Mammary epithelial cell (primary cell): ENCODE measurements at regions of chr16 and their contacts with region 1.

Region 1: GRCh38 chr16:89641458-89642119 is 15.9 kb downstream of the CHMP1A start:
- DNase-seq: no peak
- H3K4me3 ChIP-seq: no peak overlapping the region
- H3K27ac ChIP-seq: no peak overlapping the region
- H3K4me1 ChIP-seq: peaks cover 4% of the 10 kb centered on the region
- H3K27me3 ChIP-seq: no peaks in the 10 kb centered on the region
- CTCF ChIP-seq: no peak

Region 2: DNA sequence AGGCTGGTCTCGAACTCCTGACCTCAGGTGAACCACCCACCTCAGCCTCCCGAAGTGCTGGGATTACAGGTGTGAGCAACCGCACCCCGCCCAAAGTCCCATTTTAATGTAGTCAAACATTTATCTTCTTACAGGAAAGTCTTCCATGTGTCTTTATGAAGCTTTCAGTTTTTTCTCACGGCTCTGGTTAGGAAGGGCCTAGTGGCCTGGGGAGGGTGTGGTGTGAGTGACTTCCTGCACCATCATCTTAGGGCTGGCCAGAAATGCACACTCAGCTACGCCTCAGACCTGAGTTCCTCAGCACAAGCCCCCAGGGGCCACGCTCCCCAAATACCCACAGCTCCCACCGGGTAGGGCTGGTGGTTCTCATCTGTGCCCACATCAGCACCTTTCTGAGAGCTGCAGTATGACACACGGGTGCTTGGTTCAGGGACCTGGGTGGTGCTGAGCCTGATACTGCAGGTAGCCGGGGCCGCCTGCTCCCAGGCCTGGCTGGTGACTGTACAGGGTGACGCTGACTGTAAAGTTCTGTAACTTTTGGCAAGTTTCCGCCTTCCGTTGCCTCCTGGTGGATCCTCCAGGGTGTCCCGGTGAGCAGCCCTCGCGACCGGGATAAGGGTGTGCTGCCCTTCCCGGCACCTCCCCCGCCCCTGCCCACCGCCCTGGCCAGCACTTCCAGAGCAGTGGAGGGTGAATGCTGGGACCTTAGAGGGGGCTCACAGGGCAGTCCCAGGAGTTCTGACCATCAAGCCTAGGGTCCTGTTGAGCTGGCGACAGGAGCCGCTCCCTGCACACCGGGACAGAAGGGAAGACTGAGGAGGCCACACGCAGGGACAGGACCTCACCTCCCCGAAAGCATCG is 371.6 kb before region 1 on chr16:
- CTCF ChIA-PET with region 1: no interaction called
- dilution Hi-C with region 1: loop called (anchors 10 kb)
- in situ Hi-C with region 1: no loop called
- intact Hi-C with region 1: no loop called
- DNase-seq: no peak
- H3K4me3 ChIP-seq: no peak overlapping the region
- H3K27ac ChIP-seq: no peak overlapping the region
- H3K4me1 ChIP-seq: no peaks in the 10 kb centered on the region
- H3K27me3 ChIP-seq: no peaks in the 10 kb centered on the region
- CTCF ChIP-seq: no peak

Region 3: GRCh38 chr16:89505204-89506112 is 136.1 kb before region 1 on chr16:
- CTCF ChIA-PET with region 1: no interaction called
- dilution Hi-C with region 1: no loop called
- in situ Hi-C with region 1: no loop called
- intact Hi-C with region 1: no loop called
- DNase-seq: peak; percentile 79
- H3K4me3 ChIP-seq: no peak overlapping the region
- H3K27ac ChIP-seq: peak overlapping the region; percentile 47
- H3K4me1 ChIP-seq: peaks cover 37% of the 10 kb centered on the region
- H3K27me3 ChIP-seq: no peaks in the 10 kb centered on the region
- CTCF ChIP-seq: no peak

Region 4: GRCh38 chr16:89560378-89561141 is 81.0 kb before region 1 on chr16 and contains the start of gene RPL13:
- CTCF ChIA-PET with region 1: no interaction called
- dilution Hi-C with region 1: loop called (anchors 5 kb)
- in situ Hi-C with region 1: no loop called
- intact Hi-C with region 1: no loop called
- DNase-seq: peak; percentile 95
- H3K4me3 ChIP-seq: peak within 1 kb of the TSS; percentile 64 to 81 (median 78)
- H3K27ac ChIP-seq: peak within 1 kb of the TSS; percentile 88
- H3K4me1 ChIP-seq: peaks cover 43% of the 10 kb centered on the region
- H3K27me3 ChIP-seq: no peaks in the 10 kb centered on the region
- CTCF ChIP-seq: no peak
- total RNA-seq, gene RPL13: 1,876 to 2,450 TPM

Region 5: GRCh38 chr16:89574681-89575246 is 66.8 kb before region 1 on chr16:
- CTCF ChIA-PET with region 1: no interaction called
- dilution Hi-C with region 1: no loop called
- in situ Hi-C with region 1: loop called in 1 of 2 experiments (anchors 10 kb)
- intact Hi-C with region 1: loop called (anchors 1 kb)
- DNase-seq: peak; percentile 41
- H3K4me3 ChIP-seq: peak overlapping the region in 2 of 3 experiments; percentile 28 to 29
- H3K27ac ChIP-seq: no peak overlapping the region
- H3K4me1 ChIP-seq: peaks cover 15% of the 10 kb centered on the region
- H3K27me3 ChIP-seq: peaks cover 7% of the 10 kb centered on the region
- CTCF ChIP-seq: peak; percentile 64 to 67

Region 6: GRCh38 chr16:89599451-89599858 is 42.1 kb before region 1 on chr16:
- CTCF ChIA-PET with region 1: no interaction called
- dilution Hi-C with region 1: no loop called
- in situ Hi-C with region 1: no loop called
- intact Hi-C with region 1: loop called (anchors 1 kb)
- DNase-seq: peak; percentile 41
- H3K4me3 ChIP-seq: no peak overlapping the region
- H3K27ac ChIP-seq: no peak overlapping the region
- H3K4me1 ChIP-seq: peaks cover 36% of the 10 kb centered on the region
- H3K27me3 ChIP-seq: no peaks in the 10 kb centered on the region
- CTCF ChIP-seq: peak; percentile 50 to 64

Region 7: GRCh38 chr16:89615596-89616090 is 25.9 kb before region 1 on chr16:
- CTCF ChIA-PET with region 1: no interaction called
- dilution Hi-C with region 1: no loop called
- in situ Hi-C with region 1: no loop called
- intact Hi-C with region 1: loop called (anchors 1 kb)
- DNase-seq: no peak
- H3K4me3 ChIP-seq: no peak overlapping the region
- H3K27ac ChIP-seq: no peak overlapping the region
- H3K4me1 ChIP-seq: no peaks in the 10 kb centered on the region
- H3K27me3 ChIP-seq: no peaks in the 10 kb centered on the region
- CTCF ChIP-seq: peak; percentile 44 to 79

Region 8: DNA sequence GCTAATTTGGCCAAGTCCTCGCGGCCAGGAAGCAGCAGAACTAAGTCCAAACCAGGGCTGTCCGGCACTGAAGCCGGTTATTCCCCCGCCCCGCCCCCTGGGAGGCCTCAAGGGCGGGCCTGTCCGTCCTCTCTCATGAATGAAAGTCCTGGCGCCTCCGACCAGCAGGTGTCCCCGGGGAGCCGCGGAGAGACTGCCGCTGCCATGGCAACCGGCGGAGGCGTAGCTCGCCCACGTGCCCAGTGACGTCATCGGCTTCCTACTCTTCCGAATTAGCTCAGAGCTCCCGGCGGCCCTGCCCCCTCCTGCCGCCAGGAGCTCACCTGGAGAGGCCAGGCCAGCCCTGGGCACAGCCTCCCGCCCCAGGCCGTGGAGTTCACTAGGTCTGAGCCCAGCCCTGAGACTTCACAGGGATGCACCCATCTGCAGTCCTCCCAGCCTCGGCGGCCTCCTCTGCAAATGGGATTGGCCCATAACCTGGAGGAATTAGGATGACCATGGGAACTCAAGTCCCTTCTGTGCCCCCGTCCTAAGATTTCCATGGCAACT is 58.6 kb after region 1 on chr16:
- CTCF ChIA-PET with region 1: no interaction called
- dilution Hi-C with region 1: no loop called
- in situ Hi-C with region 1: no loop called
- intact Hi-C with region 1: no loop called
- DNase-seq: peak; percentile 98
- H3K4me3 ChIP-seq: peak overlapping the region; percentile 7 to 92 (median 72)
- H3K27ac ChIP-seq: peak overlapping the region; percentile 26
- H3K4me1 ChIP-seq: peaks cover 16% of the 10 kb centered on the region
- H3K27me3 ChIP-seq: no peaks in the 10 kb centered on the region
- CTCF ChIP-seq: peak; percentile 44 to 89